ENCODE measurements at regions of chr5 and their contacts with region 1.

Region 1: GRCh38 chr5:65035211-65036206 is 266.8 kb downstream of the CWC27 start:
- DNase-seq: peak; percentile 40
- ATAC-seq: peak; percentile 89
- H3K4me3 ChIP-seq: peak overlapping the region; percentile 70
- H3K27ac ChIP-seq: peak overlapping the region; percentile 90
- H3K4me1 ChIP-seq: peaks cover 15% of the 10 kb centered on the region
- H3K27me3 ChIP-seq: no peaks in the 10 kb centered on the region
- CTCF ChIP-seq: no peak
- EP300 ChIP-seq: peak in 1 of 2 experiments; percentile 42; a peak in 1 of 4 replicates
- POLR2A ChIP-seq: peak; percentile 79
- RAD21 ChIP-seq: 0 out of 2 replicates have a peak, but pooled peaks have one; percentile 1

Region 2: GRCh38 chr5:64566310-64566916 is 469.1 kb before region 1 on chr5:
- CTCF ChIA-PET with region 1: no interaction called
- POLR2A ChIA-PET with region 1: no interaction called
- RAD21 ChIA-PET with region 1: no interaction called
- SMC1A ChIA-PET with region 1: no interaction called
- in situ Hi-C with region 1: no loop called
- intact Hi-C with region 1: no loop called
- DNase-seq: no peak
- ATAC-seq: no peak
- H3K4me3 ChIP-seq: no peak overlapping the region
- H3K27ac ChIP-seq: no peak overlapping the region
- H3K4me1 ChIP-seq: no peaks in the 10 kb centered on the region
- H3K27me3 ChIP-seq: no peaks in the 10 kb centered on the region
- CTCF ChIP-seq: no peak
- EP300 ChIP-seq: no peak
- POLR2A ChIP-seq: no peak
- RAD21 ChIP-seq: no peak

Region 3: GRCh38 chr5:64979531-64979930 is 56.0 kb before region 1 on chr5:
- CTCF ChIA-PET with region 1: interaction called, 11 read pairs
- POLR2A ChIA-PET with region 1: interaction called, 11 read pairs
- RAD21 ChIA-PET with region 1: no interaction called
- SMC1A ChIA-PET with region 1: interaction called, 4 read pairs
- in situ Hi-C with region 1: no loop called
- intact Hi-C with region 1: no loop called
- DNase-seq: no peak
- ATAC-seq: peak; percentile 90
- H3K4me3 ChIP-seq: no peak overlapping the region
- H3K27ac ChIP-seq: no peak overlapping the region
- H3K4me1 ChIP-seq: peaks cover 8% of the 10 kb centered on the region; the same call in 1 of the 2 replicates
- H3K27me3 ChIP-seq: no peaks in the 10 kb centered on the region
- CTCF ChIP-seq: no peak
- EP300 ChIP-seq: no peak
- POLR2A ChIP-seq: no peak
- RAD21 ChIP-seq: no peak

Region 4: DNA sequence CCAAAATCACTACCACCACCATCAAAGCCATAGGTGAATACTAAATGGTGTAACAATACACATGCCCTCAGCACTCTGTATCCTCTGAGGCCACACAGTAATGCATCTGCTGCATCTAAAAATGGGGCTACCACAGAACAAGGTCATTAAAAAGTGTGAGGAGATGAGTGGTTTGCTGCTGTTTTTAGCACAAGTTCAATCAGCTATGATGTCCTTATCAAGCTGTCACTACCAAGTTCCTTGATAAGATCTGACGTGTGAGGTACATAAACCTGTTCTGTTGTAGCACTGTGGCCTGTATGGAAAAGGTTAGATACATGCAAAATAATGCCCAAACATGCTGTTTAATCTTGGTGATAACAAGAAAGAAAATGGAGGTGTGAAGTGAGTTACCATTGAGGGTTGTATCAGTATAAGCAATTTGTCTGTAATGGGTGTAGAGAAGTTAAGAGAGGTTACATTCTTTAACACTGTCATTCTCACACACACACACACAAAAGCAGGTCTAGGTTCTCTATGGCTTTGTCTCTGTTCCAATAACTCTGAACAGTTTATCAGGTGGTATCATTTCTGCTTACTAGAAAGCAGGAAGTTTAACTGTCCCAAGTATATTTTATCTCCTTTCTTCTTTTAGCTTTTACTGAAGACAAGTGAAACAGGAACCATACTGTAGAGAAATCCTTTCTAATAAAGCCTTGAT is 13.8 kb before region 1 on chr5:
- CTCF ChIA-PET with region 1: interaction called, 10 read pairs
- POLR2A ChIA-PET with region 1: interaction called, 3 read pairs
- RAD21 ChIA-PET with region 1: interaction called, 13 read pairs
- SMC1A ChIA-PET with region 1: interaction called, 48 read pairs
- in situ Hi-C with region 1: no loop called
- intact Hi-C with region 1: no loop called
- DNase-seq: peak; percentile 41
- ATAC-seq: peak; percentile 87
- H3K4me3 ChIP-seq: no peak overlapping the region
- H3K27ac ChIP-seq: peak overlapping the region; percentile 57
- H3K4me1 ChIP-seq: peaks cover 25% of the 10 kb centered on the region
- H3K27me3 ChIP-seq: no peaks in the 10 kb centered on the region
- CTCF ChIP-seq: no peak
- EP300 ChIP-seq: peak in 1 of 2 experiments; percentile 12; a peak in 1 of 4 replicates
- POLR2A ChIP-seq: no peak
- RAD21 ChIP-seq: no peak

Region 5: GRCh38 chr5:65047948-65048690 is 12.6 kb after region 1 on chr5:
- CTCF ChIA-PET with region 1: interaction called, 67 read pairs
- POLR2A ChIA-PET with region 1: interaction called, 52 read pairs
- RAD21 ChIA-PET with region 1: interaction called, 33 read pairs
- SMC1A ChIA-PET with region 1: interaction called, 116 read pairs
- in situ Hi-C with region 1: no loop called
- intact Hi-C with region 1: no loop called
- DNase-seq: peak; percentile 71
- ATAC-seq: peak; percentile 86
- H3K4me3 ChIP-seq: no peak overlapping the region; the same call in 1 of the 2 replicates
- H3K27ac ChIP-seq: peak overlapping the region; percentile 87
- H3K4me1 ChIP-seq: peaks cover 60% of the 10 kb centered on the region
- H3K27me3 ChIP-seq: no peaks in the 10 kb centered on the region
- CTCF ChIP-seq: no peak
- EP300 ChIP-seq: peak in 1 of 2 experiments; percentile 54; a peak in 1 of 4 replicates
- POLR2A ChIP-seq: no peak
- RAD21 ChIP-seq: 0 out of 2 replicates have a peak, but pooled peaks have one; percentile 1

Region 6: DNA sequence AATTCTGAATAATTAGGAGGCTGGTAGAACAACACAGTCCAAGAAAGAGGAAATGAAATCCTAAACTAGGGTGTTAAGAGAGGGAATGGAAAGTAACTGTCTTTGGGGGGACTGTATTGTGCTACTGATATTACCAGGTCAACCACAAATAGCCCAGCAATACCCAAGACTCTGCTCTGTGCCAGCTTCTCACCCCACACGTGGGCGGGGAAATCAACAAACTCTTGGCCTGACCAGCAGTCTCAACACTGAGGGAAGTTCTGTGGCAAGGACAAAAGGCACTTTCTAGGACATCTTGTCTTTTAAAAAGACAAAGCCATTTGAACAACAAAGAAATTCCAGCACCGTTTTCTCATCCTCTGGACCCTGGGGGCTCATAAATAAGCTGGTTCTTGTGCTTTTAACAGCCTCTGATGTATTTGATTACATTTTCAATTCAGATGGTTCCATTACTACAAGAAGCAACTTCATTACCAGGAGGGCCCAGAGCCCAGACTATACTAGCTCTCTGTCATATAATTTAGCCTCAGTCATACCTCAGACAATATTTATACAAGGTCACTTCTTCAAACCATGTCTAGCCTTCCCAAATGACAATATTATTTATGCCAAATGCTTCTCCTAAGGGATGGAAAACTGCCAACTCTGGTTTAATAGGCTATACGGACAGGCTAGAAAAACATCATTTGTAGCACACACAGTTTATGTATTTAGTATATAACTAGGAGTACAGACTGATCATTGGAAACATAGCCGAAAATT is 31.1 kb after region 1 on chr5:
- CTCF ChIA-PET with region 1: interaction called, 6 read pairs
- POLR2A ChIA-PET with region 1: interaction called, 4 read pairs
- RAD21 ChIA-PET with region 1: interaction called, 23 read pairs
- SMC1A ChIA-PET with region 1: interaction called, 614 read pairs
- in situ Hi-C with region 1: no loop called
- intact Hi-C with region 1: no loop called
- DNase-seq: peak; percentile 92
- ATAC-seq: peak; percentile 77
- H3K4me3 ChIP-seq: no peak overlapping the region
- H3K27ac ChIP-seq: peak overlapping the region; percentile 77
- H3K4me1 ChIP-seq: peaks cover 64% of the 10 kb centered on the region
- H3K27me3 ChIP-seq: no peaks in the 10 kb centered on the region
- CTCF ChIP-seq: no peak
- EP300 ChIP-seq: peak; percentile 78 to 92
- POLR2A ChIP-seq: no peak
- RAD21 ChIP-seq: no peak

Region 7: GRCh38 chr5:65076251-65076869 is 40.9 kb after region 1 on chr5:
- CTCF ChIA-PET with region 1: interaction called, 5 read pairs
- POLR2A ChIA-PET with region 1: no interaction called
- RAD21 ChIA-PET with region 1: interaction called, 4 read pairs
- SMC1A ChIA-PET with region 1: interaction called, 614 read pairs
- in situ Hi-C with region 1: no loop called
- intact Hi-C with region 1: no loop called
- DNase-seq: no peak
- ATAC-seq: peak; percentile 93
- H3K4me3 ChIP-seq: no peak overlapping the region
- H3K27ac ChIP-seq: no peak overlapping the region
- H3K4me1 ChIP-seq: peaks cover 17% of the 10 kb centered on the region
- H3K27me3 ChIP-seq: no peaks in the 10 kb centered on the region
- CTCF ChIP-seq: peak; percentile 35 to 54 (median 43)
- EP300 ChIP-seq: no peak
- POLR2A ChIP-seq: no peak
- RAD21 ChIP-seq: peak; percentile 66